GM13977 (cell line): ENCODE measurements at regions of chr11 and their contacts with region 1.

Region 1: DNA sequence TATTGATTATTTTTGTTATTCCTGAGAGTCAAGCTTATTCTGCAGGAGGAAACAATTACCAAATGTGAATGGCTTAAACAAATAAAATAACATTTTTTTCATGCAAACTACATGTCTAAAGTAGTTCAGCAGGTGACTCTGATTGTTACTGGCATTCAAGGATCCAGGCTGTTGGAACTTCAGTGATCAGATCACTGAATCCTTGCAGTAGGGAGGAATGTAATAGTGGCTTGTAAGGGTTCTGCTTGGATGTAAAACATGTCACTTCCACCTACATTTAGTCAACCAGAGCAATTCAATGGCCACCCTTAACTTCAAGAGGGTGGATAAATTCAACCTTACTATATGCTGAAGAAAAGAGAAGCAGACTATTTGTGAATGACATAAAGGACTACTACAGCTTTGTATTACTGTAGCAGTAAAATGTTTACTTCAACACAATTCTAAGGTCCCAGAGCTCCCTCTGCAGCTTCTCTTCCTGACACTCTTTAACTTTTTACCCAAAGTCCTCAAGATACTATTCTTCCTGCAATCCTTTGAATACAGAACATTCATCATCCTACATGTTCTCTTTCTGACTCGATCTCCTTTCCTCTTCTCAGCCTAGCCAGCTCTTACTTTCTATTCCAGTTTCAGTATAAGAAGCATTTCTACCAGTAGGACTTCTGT is 284.0 kb downstream of the LRRC4C start:
- DNase-seq: no peak
- CTCF ChIP-seq: no peak

Region 2: DNA sequence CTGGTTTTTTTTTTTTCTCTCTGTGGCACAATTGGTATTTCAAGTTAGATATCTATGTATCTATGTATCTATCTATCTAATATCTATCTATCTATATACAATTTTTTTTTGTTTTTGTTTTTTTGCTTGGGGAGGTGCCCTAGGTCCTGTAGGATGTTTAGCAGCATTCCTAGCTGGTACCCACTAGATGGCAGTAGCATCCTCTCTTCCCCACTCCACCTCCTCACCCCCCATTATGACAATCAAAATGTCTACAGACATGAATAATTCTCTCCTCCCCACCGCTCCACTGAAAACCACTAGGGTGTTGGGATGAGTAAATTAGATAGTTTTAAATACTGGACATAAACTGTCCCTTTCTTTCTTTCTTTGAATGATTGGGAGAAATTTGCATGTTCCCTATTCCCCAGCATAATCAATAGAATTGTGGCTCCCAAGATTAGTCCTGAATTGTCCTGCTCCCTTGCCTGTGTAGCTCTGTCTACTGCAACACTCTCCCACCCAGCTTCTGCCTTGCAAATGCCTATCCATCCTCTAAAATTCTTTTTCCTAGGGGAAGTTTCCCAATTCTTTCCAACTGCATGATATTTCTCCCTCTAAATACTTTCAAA is 868.4 kb before region 1 on chr11:
- in situ Hi-C with region 1: loop called (anchors 25 kb)
- DNase-seq: peak; percentile 47
- CTCF ChIP-seq: peak; percentile 55